Endothelial cell of umbilical vein (primary cell): ENCODE measurements at regions of chr17 and their contacts with region 1.

Region 1: DNA sequence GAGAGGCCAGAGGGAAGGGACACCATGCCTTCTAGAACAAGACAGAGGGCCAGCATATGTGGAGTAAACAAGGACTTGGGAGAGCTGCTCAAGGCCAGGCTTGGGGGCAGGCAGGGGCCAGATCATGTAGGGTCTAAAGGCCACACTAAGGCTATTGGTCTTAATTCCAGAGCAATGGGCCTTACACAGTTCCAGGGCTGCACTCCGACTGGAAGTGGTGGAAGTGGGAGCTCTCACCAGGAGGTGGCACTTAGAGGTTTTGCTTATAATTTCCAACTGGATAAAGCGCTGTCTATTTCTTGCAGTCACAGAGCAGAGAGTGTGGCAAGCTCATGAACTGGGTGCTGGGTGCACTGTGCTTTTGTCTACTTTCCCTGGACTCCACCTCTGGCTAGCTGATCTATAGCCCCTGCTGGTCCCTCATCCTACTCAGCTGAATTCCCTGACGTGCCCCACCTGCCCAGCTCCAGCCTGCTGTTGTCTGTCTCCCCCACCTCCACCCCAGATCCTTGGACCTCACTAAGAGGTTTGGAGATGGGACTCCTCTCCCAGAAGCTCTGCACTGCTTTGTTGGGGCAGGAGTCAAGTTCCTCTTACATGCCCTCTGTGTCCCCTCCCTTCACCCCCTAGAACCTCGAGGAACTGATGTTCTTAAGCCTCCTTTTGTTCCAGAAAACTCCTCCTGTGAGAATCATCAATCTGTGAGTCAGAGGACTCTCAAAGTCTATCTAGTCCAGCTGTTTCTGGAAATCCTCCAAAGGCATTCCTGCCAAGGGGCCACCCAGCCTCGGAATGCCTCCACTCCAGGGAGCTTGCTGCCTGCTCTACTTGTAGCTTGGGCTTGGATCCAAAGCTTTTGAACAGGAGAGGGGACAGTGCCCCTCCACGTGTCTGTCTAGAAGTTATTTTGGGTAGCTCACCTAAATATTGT is 48.1 kb upstream of the KSR1 start:
- DNase-seq: peak; percentile 12
- H3K4me3 ChIP-seq: no peak overlapping the region
- H3K27ac ChIP-seq: no peak overlapping the region
- H3K4me1 ChIP-seq: peaks cover 5% of the 10 kb centered on the region
- H3K27me3 ChIP-seq: no peaks in the 10 kb centered on the region
- CTCF ChIP-seq: no peak
- POLR2A ChIP-seq: no peak

Region 2: DNA sequence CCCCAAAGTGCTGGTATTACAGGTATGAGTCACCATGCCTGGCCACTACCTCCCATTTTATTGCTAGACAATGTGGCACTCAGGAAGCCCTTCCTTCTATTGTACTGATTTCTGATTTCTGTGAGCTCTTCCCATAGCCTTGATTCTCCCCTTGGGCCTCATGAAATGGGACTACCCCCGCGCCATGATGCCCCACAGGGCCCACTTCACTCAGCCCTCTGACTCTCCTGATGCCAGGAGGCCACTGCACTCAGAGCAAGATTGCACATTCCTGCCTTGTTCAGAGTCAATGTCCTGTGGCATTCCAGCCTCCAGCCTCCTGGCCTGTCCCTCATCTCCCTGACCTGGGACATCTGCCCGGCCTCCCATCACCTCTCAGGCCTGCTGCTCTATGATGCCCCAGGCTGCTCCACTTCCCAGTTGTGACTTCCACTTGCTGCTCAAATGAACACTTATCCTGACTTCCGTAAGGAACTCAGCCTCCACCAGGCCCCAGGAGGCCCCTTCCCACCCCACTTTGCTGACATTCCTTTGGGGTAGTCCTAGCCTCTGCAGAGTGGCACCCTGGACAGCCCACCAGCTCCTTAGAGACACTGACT is 18.5 kb before region 1 on chr17:
- CTCF ChIA-PET with region 1: interaction called, 6 read pairs
- POLR2A ChIA-PET with region 1: no interaction called
- dilution Hi-C with region 1: no loop called
- intact Hi-C with region 1: loop called (anchors 2 kb)
- DNase-seq: no peak
- H3K4me3 ChIP-seq: no peak overlapping the region
- H3K27ac ChIP-seq: no peak overlapping the region
- H3K4me1 ChIP-seq: peaks cover 11% of the 10 kb centered on the region
- H3K27me3 ChIP-seq: no peaks in the 10 kb centered on the region
- CTCF ChIP-seq: no peak
- POLR2A ChIP-seq: no peak